ENCODE measurements at regions of chrX and their contacts with region 1.

Region 1: DNA sequence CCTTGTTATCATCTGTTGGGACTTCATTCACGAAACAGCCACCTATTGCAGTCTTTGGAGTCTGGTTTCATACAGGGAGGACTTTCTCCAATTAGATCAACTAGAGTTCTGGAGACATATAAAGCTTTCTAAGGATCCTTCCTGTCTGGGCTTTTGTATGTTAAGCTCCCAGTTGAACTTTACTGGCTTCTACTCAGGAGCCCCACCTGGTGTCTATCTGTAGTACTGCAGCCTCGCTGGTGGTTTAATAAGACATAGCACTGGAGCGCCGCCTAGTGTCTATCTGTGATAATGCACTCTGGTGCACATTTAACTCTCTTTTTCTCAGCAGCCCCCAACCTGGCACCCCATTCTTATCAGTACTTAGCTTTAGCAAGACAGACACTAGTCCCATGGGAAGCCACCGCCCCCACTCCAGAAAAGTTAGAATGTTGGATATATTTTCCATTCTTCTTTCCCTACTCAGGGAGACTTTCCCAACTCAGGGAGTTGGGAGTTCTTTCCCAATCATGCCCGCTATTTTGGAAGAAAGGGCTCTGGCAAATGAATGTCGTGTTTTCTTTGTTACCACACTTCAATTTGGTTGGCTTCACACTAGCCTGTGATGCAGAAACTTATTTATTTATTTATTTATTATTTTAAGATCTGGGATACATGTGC is 36.9 kb upstream of the SYTL4 start:
- DNase-seq: peak; percentile 72 to 92 (median 79)
- ATAC-seq: peak; percentile 90
- H3K4me3 ChIP-seq: no peak overlapping the region
- H3K4me3 Mint-ChIP-seq: no peak overlapping the region
- H3K27ac ChIP-seq: no peak overlapping the region
- H3K27ac Mint-ChIP-seq: no peak overlapping the region
- H3K4me1 ChIP-seq: no peaks in the 10 kb centered on the region
- H3K4me1 Mint-ChIP-seq: no peaks in the 10 kb centered on the region
- H3K27me3 ChIP-seq: peaks cover 0 to 9% of the 10 kb centered on the region in 2 experiments
- H3K27me3 Mint-ChIP-seq: peaks cover 10% of the 10 kb centered on the region
- CTCF ChIP-seq: peak; percentile 93

Region 2: DNA sequence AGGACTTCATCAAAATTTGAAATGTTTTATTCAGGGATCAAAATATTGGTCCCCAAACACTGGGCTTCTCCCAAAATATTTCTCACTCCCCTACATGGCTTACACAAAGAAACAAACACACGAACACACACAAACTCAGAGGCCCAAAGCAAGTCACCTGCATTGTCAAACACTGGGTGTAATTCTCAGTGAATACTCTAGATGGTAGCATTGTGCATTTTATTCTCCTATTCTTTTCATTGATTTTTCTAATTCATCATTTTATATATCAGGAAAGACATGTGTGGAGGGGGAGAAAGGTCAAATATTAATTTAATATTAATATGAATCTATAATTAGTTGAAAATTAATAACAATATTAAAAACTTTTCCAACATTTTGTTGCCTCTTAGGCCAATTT is 256.3 kb before region 1 on chrX:
- CTCF ChIA-PET with region 1: interaction called, 3 read pairs
- POLR2A ChIA-PET with region 1: no interaction called
- intact Hi-C with region 1: loop called in 1 of 2 experiments (anchors 5 kb)
- DNase-seq: peak in 3 of 14 experiments; percentile 12 to 19 (median 14)
- ATAC-seq: no peak
- H3K4me3 ChIP-seq: no peak overlapping the region
- H3K4me3 Mint-ChIP-seq: no peak overlapping the region
- H3K27ac ChIP-seq: no peak overlapping the region
- H3K27ac Mint-ChIP-seq: no peak overlapping the region
- H3K4me1 ChIP-seq: no peaks in the 10 kb centered on the region
- H3K4me1 Mint-ChIP-seq: no peaks in the 10 kb centered on the region
- H3K27me3 ChIP-seq: no peaks in the 10 kb centered on the region
- H3K27me3 Mint-ChIP-seq: no peaks in the 10 kb centered on the region
- CTCF ChIP-seq: peak; percentile 65

Region 3: DNA sequence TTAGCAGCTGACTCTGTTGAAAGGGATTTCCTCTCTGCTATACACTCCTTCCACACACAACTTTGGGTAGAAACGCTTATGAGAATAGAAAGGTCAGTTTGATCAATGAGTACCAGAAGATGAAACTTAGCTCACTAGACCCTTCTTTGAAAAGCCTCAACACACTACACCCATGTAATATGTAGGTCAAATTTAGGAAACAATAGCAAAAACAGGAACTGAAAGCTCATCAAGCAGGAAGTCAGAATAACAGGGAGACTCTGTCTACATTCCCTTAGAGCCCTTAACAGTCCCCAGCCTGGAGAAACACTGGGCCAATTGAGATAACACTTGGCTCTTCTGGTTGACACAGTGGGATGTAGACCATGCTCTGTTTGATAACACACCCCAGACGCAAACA is 94.1 kb before region 1 on chrX:
- CTCF ChIA-PET with region 1: interaction called, 13 read pairs
- POLR2A ChIA-PET with region 1: no interaction called
- intact Hi-C with region 1: loop called in 1 of 2 experiments (anchors 5 kb)
- DNase-seq: peak in 2 of 14 experiments; percentile 1 to 12
- ATAC-seq: no peak
- H3K4me3 ChIP-seq: no peak overlapping the region
- H3K4me3 Mint-ChIP-seq: peak overlapping the region; percentile 30
- H3K27ac ChIP-seq: no peak overlapping the region
- H3K27ac Mint-ChIP-seq: no peak overlapping the region
- H3K4me1 ChIP-seq: no peaks in the 10 kb centered on the region
- H3K4me1 Mint-ChIP-seq: peaks cover 12% of the 10 kb centered on the region
- H3K27me3 ChIP-seq: no peaks in the 10 kb centered on the region
- H3K27me3 Mint-ChIP-seq: peaks cover 4% of the 10 kb centered on the region
- CTCF ChIP-seq: no peak

Region 4: DNA sequence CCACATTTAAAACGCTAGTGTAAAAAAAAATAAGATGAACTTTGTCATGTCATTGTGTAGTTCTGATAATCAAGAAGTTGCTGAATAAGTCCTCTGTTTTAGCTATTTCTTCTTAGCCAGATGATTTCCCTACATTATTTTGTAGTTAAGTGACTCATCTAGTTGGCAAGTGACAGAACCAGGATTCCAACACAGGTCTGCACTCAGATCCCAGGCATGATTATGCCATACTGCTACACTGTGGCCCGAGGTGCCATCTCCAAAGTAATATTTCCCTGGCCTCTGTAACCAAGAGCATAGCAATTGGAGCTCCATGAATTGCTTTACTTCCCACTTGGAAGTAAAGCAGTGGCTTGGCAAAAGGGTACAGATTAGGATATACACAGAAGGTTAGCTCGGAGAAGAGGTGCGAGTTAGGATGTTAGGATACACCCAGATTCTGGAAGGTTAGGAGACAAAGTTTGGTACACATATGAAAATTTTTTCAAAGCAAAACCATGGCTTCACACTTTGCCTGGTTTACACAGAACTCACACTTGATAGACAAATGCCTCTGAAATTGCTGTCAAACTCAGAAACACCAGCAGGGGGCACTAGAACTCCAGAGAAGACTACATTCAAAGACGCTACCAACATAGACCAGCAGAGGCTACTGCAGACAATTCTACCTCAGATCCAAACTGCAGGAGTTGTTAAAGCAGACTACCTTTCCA is 83.4 kb before region 1 on chrX:
- CTCF ChIA-PET with region 1: interaction called, 7 read pairs
- POLR2A ChIA-PET with region 1: no interaction called
- intact Hi-C with region 1: loop called (anchors 1 to 2 kb)
- DNase-seq: peak; percentile 31 to 75 (median 45)
- ATAC-seq: peak; percentile 64
- H3K4me3 ChIP-seq: no peak overlapping the region
- H3K4me3 Mint-ChIP-seq: no peak overlapping the region
- H3K27ac ChIP-seq: no peak overlapping the region
- H3K27ac Mint-ChIP-seq: no peak overlapping the region
- H3K4me1 ChIP-seq: no peaks in the 10 kb centered on the region
- H3K4me1 Mint-ChIP-seq: no peaks in the 10 kb centered on the region
- H3K27me3 ChIP-seq: no peaks in the 10 kb centered on the region
- H3K27me3 Mint-ChIP-seq: peaks cover 6% of the 10 kb centered on the region
- CTCF ChIP-seq: peak; percentile 69

Region 5: DNA sequence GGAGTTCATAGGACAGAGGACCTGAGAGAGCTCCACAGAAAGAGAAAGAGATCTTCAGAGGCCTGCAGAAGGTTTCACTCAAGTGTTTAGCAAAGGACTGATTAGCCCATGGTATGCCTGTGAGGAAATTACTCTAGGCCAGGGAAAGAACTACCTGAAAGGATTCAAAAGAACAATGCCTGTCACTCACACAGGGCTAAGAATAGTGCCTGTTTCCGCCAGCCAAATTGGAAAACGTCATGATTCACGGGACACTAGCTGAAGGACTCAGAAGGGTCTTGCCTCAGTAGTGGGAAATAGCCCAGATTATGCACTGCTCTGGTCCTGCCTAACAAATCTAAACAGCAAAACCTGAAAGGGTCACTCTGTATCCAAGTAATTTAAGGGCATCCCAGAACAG is 58.0 kb before region 1 on chrX:
- CTCF ChIA-PET with region 1: no interaction called
- POLR2A ChIA-PET with region 1: no interaction called
- intact Hi-C with region 1: no loop called
- DNase-seq: no peak
- ATAC-seq: no peak
- H3K4me3 ChIP-seq: no peak overlapping the region
- H3K4me3 Mint-ChIP-seq: no peak overlapping the region
- H3K27ac ChIP-seq: no peak overlapping the region
- H3K27ac Mint-ChIP-seq: no peak overlapping the region
- H3K4me1 ChIP-seq: no peaks in the 10 kb centered on the region
- H3K4me1 Mint-ChIP-seq: no peaks in the 10 kb centered on the region
- H3K27me3 ChIP-seq: peaks cover 2 to 6% of the 10 kb centered on the region in 2 experiments
- H3K27me3 Mint-ChIP-seq: peaks cover 12% of the 10 kb centered on the region
- CTCF ChIP-seq: no peak

Region 6: DNA sequence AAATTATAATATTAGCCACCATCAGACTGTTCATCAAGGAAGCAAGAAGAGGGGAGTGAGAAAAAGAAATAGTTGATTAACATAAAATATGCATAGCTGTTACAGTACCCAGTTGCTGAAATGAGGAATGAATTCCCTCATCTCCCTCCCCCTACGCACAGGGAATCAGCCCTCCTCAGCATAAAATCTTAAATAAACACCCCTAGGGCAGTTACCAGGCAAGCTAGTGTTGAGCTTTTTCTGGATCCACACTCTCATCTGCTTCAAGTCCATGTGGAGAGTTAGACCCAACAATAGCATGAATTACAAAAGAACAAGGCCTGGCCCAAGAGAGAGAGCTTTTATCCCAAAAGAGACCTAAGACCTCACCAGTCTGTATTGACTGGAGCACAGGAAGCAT is 17.9 kb before region 1 on chrX:
- CTCF ChIA-PET with region 1: interaction called, 13 read pairs
- POLR2A ChIA-PET with region 1: no interaction called
- intact Hi-C with region 1: no loop called
- DNase-seq: no peak
- ATAC-seq: no peak
- H3K4me3 ChIP-seq: no peak overlapping the region
- H3K4me3 Mint-ChIP-seq: no peak overlapping the region
- H3K27ac ChIP-seq: no peak overlapping the region
- H3K27ac Mint-ChIP-seq: no peak overlapping the region
- H3K4me1 ChIP-seq: no peaks in the 10 kb centered on the region
- H3K4me1 Mint-ChIP-seq: no peaks in the 10 kb centered on the region
- H3K27me3 ChIP-seq: peaks cover 1 to 3% of the 10 kb centered on the region in 2 experiments
- H3K27me3 Mint-ChIP-seq: peaks cover 28% of the 10 kb centered on the region
- CTCF ChIP-seq: no peak

Region 7: GRCh38 chrX:101252634-101253033 is 483.8 kb after region 1 on chrX:
- CTCF ChIA-PET with region 1: no interaction called
- POLR2A ChIA-PET with region 1: no interaction called
- intact Hi-C with region 1: no loop called
- DNase-seq: no peak
- ATAC-seq: no peak
- H3K4me3 ChIP-seq: no peak overlapping the region
- H3K4me3 Mint-ChIP-seq: no peak overlapping the region
- H3K27ac ChIP-seq: no peak overlapping the region
- H3K27ac Mint-ChIP-seq: no peak overlapping the region
- H3K4me1 ChIP-seq: no peaks in the 10 kb centered on the region
- H3K4me1 Mint-ChIP-seq: peaks cover 3% of the 10 kb centered on the region
- H3K27me3 ChIP-seq: no peaks in the 10 kb centered on the region
- H3K27me3 Mint-ChIP-seq: no peaks in the 10 kb centered on the region
- CTCF ChIP-seq: no peak